ENCODE measurements at regions of chr19 and their contacts with region 1.

Region 1: DNA sequence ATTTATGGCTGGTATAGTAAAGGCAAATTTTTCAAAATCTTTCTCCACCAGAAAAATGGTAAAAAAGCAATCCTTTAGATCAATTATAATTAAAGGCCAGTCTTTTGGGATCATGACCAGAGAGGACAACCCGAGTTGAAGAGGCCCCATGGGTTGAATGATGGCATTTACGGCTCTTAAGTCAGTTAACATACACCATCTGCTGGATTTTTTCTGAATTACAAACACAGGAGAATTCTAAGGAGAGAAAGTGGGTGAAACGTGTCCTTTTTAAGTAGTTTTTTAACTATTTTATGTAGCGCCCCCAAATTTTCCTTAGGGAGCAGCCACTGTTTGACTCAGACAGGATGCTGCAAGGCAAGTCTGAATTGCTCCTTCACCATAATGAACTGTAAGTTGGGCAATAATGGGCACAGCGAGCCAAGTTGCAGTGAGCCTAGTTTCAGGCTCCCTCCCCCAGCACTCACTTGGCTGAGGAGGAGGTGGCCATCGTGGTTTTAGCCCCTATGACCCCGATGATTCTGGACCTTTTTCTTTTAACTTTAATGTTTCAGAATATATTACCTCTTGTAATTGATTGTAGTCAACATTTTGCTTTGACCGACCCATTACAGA is 13.6 kb upstream of the ZNF611 start:
- DNase-seq: no peak
- ATAC-seq: no peak
- H3K4me3 Mint-ChIP-seq: no peak overlapping the region
- H3K27ac Mint-ChIP-seq: no peak overlapping the region
- H3K4me1 Mint-ChIP-seq: no peaks in the 10 kb centered on the region
- H3K27me3 Mint-ChIP-seq: no peaks in the 10 kb centered on the region

Region 2: GRCh38 chr19:52248241-52248640 is 500.2 kb before region 1 on chr19:
- CTCF ChIA-PET with region 1: interaction called, 3 read pairs
- POLR2A ChIA-PET with region 1: no interaction called
- intact Hi-C with region 1: loop called (anchors 1 to 2 kb)
- DNase-seq: peak; percentile 82
- ATAC-seq: peak; percentile 93
- H3K4me3 Mint-ChIP-seq: no peak overlapping the region
- H3K27ac Mint-ChIP-seq: no peak overlapping the region
- H3K4me1 Mint-ChIP-seq: no peaks in the 10 kb centered on the region
- H3K27me3 Mint-ChIP-seq: no peaks in the 10 kb centered on the region

Region 3: GRCh38 chr19:52343548-52343947 is 404.9 kb before region 1 on chr19:
- CTCF ChIA-PET with region 1: no interaction called
- POLR2A ChIA-PET with region 1: no interaction called
- intact Hi-C with region 1: loop called in 1 of 2 experiments (anchors 5 kb)
- DNase-seq: peak; percentile 75
- ATAC-seq: peak; percentile 90
- H3K4me3 Mint-ChIP-seq: no peak overlapping the region
- H3K27ac Mint-ChIP-seq: no peak overlapping the region
- H3K4me1 Mint-ChIP-seq: peaks cover 2% of the 10 kb centered on the region
- H3K27me3 Mint-ChIP-seq: no peaks in the 10 kb centered on the region

Measured in activated CD4-positive, alpha-beta T cell treated with anti-CD3 and anti-CD28 coated beads for 36 hours (primary cell).